BJ (cell line): ENCODE measurements at regions of chr13 and their contacts with region 1.

Region 1: GRCh38 chr13:113656831-113657671 is 947 bp downstream of the ATP4B start:
- DNase-seq: no peak
- H3K4me3 ChIP-seq: no peak overlapping the region
- H3K27me3 ChIP-seq: peaks cover 2% of the 10 kb centered on the region; the same call in 1 of the 2 replicates
- CTCF ChIP-seq: no peak

Region 2: DNA sequence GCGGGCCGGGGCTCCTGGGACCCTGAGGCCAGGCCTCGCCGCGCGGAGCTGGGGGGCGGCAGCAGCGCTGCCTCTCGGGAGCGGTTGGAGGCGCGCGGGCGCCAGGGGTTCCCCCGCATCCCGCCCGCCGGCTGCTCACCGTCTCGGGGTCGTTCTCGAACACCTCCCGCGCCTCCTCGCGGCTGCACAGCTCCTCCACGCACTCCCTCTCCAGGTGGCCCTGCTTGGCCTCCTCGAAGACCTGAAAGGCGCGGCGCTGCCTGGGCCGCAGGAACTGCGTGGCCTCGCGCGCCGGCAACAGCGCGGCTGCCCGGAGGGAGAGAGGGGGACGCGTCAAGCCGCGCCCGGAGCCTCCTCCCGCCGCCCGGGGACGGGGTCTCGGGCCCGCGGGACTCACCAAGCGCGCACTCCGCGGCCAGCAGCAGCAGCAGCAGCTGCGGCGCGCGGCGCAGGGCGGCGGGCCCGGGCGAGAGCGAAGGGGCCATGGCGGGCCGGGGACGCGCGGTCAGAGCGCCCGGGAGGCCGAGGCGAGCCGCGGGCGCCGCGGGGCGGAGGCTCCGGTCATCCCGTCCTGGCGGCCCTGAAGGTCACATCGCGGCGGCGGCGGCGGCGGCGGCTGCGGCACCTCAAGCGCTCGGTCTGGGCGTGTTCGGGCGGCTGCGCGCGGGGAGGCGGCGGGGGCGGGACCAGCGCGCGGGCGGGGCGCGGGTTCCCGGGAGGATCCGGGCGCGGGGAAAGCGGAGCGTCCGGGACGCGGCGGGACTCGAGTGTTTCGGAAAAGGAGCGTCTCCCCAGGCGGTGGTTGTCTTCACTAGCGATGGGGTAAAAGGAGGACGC is 206.6 kb after region 1 on chr13 and contains the start of gene GAS6:
- CTCF ChIA-PET with region 1: no interaction called
- POLR2A ChIA-PET with region 1: no interaction called
- DNase-seq: no peak
- H3K4me3 ChIP-seq: peak within 1 kb of the TSS; percentile 86
- H3K27me3 ChIP-seq: no peaks in the 10 kb centered on the region
- CTCF ChIP-seq: no peak
- polyA plus RNA-seq, gene GAS6: 247 and 374 TPM in 2 replicates

Region 3: DNA sequence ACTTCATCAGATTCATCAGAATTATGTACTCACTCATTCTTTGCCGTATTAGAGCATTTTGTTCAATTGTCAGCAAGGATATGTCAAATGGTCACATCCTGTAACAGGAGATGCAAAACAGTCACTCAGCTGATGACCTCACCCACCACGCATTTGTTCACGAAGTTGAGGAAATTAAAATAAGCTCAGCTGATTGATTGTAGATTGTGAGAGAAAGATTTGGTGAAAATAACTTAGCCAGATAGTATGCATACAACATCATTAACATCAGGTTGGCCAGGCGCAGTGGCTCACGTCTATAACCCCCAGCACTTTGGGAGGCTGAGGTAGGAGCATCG is 555.1 kb after region 1 on chr13:
- CTCF ChIA-PET with region 1: no interaction called
- POLR2A ChIA-PET with region 1: interaction called, 12 read pairs
- DNase-seq: no peak
- H3K4me3 ChIP-seq: no peak overlapping the region
- H3K27me3 ChIP-seq: peaks cover 2% of the 10 kb centered on the region; the same call in 1 of the 2 replicates
- CTCF ChIP-seq: no peak